B cell (primary cell): ENCODE measurements at regions of chr6 and their contacts with region 1.

Region 1: GRCh38 chr6:87756858-87757257 is 54.8 kb upstream of the AKIRIN2 start:
- DNase-seq: peak; percentile 86
- ATAC-seq: peak; percentile 91
- H3K4me3 ChIP-seq: no peak overlapping the region
- H3K4me3 Mint-ChIP-seq: peak overlapping the region; percentile 62
- H3K27ac ChIP-seq: peak overlapping the region; percentile 9 to 43
- H3K27ac Mint-ChIP-seq: peak overlapping the region; percentile 89
- H3K4me1 ChIP-seq: peaks cover 37 to 40% of the 10 kb centered on the region in 2 donors
- H3K4me1 Mint-ChIP-seq: peaks cover 36% of the 10 kb centered on the region
- H3K27me3 ChIP-seq: no peaks in the 10 kb centered on the region
- H3K27me3 Mint-ChIP-seq: no peaks in the 10 kb centered on the region
- CTCF ChIP-seq: no peak

Region 2: DNA sequence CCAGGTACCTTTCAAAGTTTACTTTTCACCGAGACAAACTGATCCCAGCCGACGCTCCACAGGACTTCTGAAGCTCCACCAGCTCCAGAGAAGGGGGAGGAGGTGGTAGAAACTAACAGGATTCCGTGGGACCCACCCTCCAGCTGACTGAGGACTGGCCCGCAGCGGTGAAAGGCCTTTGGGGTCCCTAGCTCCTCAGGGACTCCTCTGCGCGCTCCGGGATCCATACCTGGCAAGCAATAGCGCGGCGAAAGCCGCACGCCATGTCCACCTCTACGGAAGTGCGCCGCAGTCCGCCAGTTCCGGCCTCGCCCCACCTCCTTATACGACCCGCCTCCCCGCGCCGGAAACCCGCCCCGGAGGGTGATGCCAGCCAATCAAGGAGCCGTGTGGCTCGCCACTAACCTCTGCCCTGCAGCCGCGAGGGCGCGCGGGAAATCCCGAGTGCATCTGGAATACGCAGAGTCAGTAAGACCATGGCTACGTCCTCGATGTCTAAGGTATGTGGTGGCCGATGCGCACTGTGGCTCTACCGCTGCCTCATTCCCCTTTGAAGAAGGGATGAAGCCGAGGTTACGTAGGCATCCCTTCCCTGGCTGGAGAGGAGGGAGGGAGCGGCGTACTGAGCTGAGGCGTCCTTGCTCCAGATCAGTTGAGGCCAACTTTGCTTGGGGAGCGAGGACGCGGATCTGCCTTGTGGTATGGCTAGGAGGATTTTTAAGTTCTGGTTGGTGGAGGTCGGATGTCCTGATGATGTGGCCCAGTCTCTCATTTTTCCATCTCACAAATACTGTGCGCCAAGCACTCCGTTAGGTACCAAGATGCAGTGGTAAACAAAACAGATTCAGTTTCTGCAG is 166.9 kb before region 1 on chr6 and contains the starts of genes ORC3 and RARS2:
- CTCF ChIA-PET with region 1: no interaction called
- POLR2A ChIA-PET with region 1: no interaction called
- intact Hi-C with region 1: loop called (anchors 2 kb)
- DNase-seq: peak; percentile 94
- ATAC-seq: peak; percentile 99
- H3K4me3 ChIP-seq: peak within 1 kb of the TSS; percentile 74 to 100 (median 96)
- H3K4me3 Mint-ChIP-seq: peak within 1 kb of the TSS; percentile 96
- H3K27ac ChIP-seq: peak within 1 kb of the TSS; percentile 78 to 91
- H3K27ac Mint-ChIP-seq: peak within 1 kb of the TSS; percentile 88
- H3K4me1 ChIP-seq: peaks cover 27 to 28% of the 10 kb centered on the region in 2 donors
- H3K4me1 Mint-ChIP-seq: peaks cover 56% of the 10 kb centered on the region
- H3K27me3 ChIP-seq: no peaks in the 10 kb centered on the region
- H3K27me3 Mint-ChIP-seq: no peaks in the 10 kb centered on the region
- CTCF ChIP-seq: no peak
- total RNA-seq, gene ORC3: 27.8 and 31.2 TPM in 2 replicates
- total RNA-seq, gene RARS2: 37.9 and 38.7 TPM in 2 replicates

Region 3: GRCh38 chr6:87682310-87682709 is 74.5 kb before region 1 on chr6:
- CTCF ChIA-PET with region 1: no interaction called
- POLR2A ChIA-PET with region 1: no interaction called
- intact Hi-C with region 1: no loop called
- DNase-seq: no peak
- ATAC-seq: no peak
- H3K4me3 ChIP-seq: no peak overlapping the region
- H3K4me3 Mint-ChIP-seq: no peak overlapping the region
- H3K27ac ChIP-seq: peak overlapping the region in 1 of 2 donors; percentile 74
- H3K27ac Mint-ChIP-seq: peak overlapping the region; percentile 74
- H3K4me1 ChIP-seq: peaks cover 16 to 47% of the 10 kb centered on the region in 2 donors
- H3K4me1 Mint-ChIP-seq: peaks cover 66% of the 10 kb centered on the region
- H3K27me3 ChIP-seq: no peaks in the 10 kb centered on the region
- H3K27me3 Mint-ChIP-seq: no peaks in the 10 kb centered on the region
- CTCF ChIP-seq: no peak

Region 4: GRCh38 chr6:87799651-87800050 is 42.8 kb after region 1 on chr6:
- CTCF ChIA-PET with region 1: interaction called, 3 read pairs
- POLR2A ChIA-PET with region 1: interaction called, 6 read pairs
- intact Hi-C with region 1: loop called (anchors 5 kb)
- DNase-seq: peak; percentile 63
- ATAC-seq: peak; percentile 69
- H3K4me3 ChIP-seq: peak overlapping the region in 2 of 5 experiments; percentile 13 to 20
- H3K4me3 Mint-ChIP-seq: peak overlapping the region; percentile 42
- H3K27ac ChIP-seq: peak overlapping the region in 1 of 2 donors; percentile 50
- H3K27ac Mint-ChIP-seq: peak overlapping the region; percentile 28
- H3K4me1 ChIP-seq: peaks cover 38 to 54% of the 10 kb centered on the region in 2 donors
- H3K4me1 Mint-ChIP-seq: peaks cover 46% of the 10 kb centered on the region
- H3K27me3 ChIP-seq: no peaks in the 10 kb centered on the region
- H3K27me3 Mint-ChIP-seq: no peaks in the 10 kb centered on the region
- CTCF ChIP-seq: no peak

Region 5: DNA sequence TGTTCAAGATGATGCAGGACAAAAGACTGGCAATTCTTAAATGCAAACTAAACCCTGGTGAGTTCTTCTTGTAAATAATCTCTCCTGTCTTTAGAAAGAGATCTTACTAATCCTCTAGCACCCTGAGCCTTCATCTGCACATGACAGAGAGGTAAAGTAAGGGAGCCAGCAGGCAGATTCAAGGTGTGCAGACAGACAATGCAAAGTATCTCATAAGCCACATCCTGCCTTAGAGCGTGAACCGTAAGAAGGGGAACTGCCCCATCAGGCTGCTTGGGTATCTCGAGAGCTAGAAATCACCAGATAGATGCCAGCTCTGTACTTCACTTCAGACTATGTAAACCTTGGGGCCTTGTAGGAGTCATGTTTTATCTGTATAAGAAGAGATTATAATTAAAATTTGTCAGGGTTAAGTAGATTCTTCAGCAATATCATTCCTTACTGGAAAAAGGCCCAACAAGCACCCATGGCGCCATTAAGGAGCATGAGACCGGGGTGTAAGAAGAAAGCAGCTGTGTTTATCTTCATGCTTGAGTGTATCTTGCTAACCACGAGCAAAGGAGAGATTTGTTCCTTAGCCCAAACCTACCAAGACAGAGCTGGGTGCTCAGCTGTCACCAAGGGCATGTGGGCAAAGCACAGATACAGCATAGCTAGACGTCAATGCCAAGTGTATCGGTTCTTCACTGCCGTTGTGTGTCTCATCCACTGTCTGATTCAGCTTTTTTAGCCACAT is 384.9 kb after region 1 on chr6:
- CTCF ChIA-PET with region 1: no interaction called
- POLR2A ChIA-PET with region 1: no interaction called
- intact Hi-C with region 1: loop called (anchors 5 kb)
- DNase-seq: peak; percentile 91
- ATAC-seq: peak; percentile 91
- H3K4me3 ChIP-seq: peak overlapping the region in 2 of 5 experiments; percentile 30 to 33
- H3K4me3 Mint-ChIP-seq: peak overlapping the region; percentile 67
- H3K27ac ChIP-seq: peak overlapping the region; percentile 87 to 95
- H3K27ac Mint-ChIP-seq: peak overlapping the region; percentile 96
- H3K4me1 ChIP-seq: peaks cover 45 to 49% of the 10 kb centered on the region in 2 donors
- H3K4me1 Mint-ChIP-seq: peaks cover 56% of the 10 kb centered on the region
- H3K27me3 ChIP-seq: no peaks in the 10 kb centered on the region
- H3K27me3 Mint-ChIP-seq: no peaks in the 10 kb centered on the region
- CTCF ChIP-seq: no peak

Region 6: GRCh38 chr6:88761237-88762031 is 1004.6 kb after region 1 on chr6:
- CTCF ChIA-PET with region 1: no interaction called
- POLR2A ChIA-PET with region 1: interaction called, 12 read pairs
- intact Hi-C with region 1: no loop called
- DNase-seq: peak; percentile 77
- ATAC-seq: peak; percentile 79
- H3K4me3 ChIP-seq: no peak overlapping the region
- H3K4me3 Mint-ChIP-seq: peak overlapping the region; percentile 1
- H3K27ac ChIP-seq: peak overlapping the region in 1 of 2 donors; percentile 70
- H3K27ac Mint-ChIP-seq: peak overlapping the region; percentile 51
- H3K4me1 ChIP-seq: peaks cover 16 to 18% of the 10 kb centered on the region in 2 donors
- H3K4me1 Mint-ChIP-seq: peaks cover 33% of the 10 kb centered on the region
- H3K27me3 ChIP-seq: no peaks in the 10 kb centered on the region
- H3K27me3 Mint-ChIP-seq: no peaks in the 10 kb centered on the region
- CTCF ChIP-seq: peak; percentile 48